Sigmoid colon (tissue), 7 donors: ENCODE measurements at regions of chr2 and their contacts with region 1.

Region 1: GRCh38 chr2:9205963-9206948 is at the start of gene ASAP2:
- DNase-seq: peak; percentile 89
- H3K4me3 ChIP-seq: peak within 1 kb of the TSS; percentile 72 to 95 (median 82)
- H3K27ac ChIP-seq: peak within 1 kb of the TSS; percentile 84 to 95 (median 90)
- H3K4me1 ChIP-seq: peaks cover 0 to 40% (median 22%) of the 10 kb centered on the region in 4 donors
- H3K27me3 ChIP-seq: no peaks in the 10 kb centered on the region
- CTCF ChIP-seq: peak; percentile 51 to 84 (median 70)
- EP300 ChIP-seq: no peak
- POLR2A ChIP-seq: no peak
- total RNA-seq, gene ASAP2: 22.1 to 56.5 (median 26.5) TPM

Region 2: DNA sequence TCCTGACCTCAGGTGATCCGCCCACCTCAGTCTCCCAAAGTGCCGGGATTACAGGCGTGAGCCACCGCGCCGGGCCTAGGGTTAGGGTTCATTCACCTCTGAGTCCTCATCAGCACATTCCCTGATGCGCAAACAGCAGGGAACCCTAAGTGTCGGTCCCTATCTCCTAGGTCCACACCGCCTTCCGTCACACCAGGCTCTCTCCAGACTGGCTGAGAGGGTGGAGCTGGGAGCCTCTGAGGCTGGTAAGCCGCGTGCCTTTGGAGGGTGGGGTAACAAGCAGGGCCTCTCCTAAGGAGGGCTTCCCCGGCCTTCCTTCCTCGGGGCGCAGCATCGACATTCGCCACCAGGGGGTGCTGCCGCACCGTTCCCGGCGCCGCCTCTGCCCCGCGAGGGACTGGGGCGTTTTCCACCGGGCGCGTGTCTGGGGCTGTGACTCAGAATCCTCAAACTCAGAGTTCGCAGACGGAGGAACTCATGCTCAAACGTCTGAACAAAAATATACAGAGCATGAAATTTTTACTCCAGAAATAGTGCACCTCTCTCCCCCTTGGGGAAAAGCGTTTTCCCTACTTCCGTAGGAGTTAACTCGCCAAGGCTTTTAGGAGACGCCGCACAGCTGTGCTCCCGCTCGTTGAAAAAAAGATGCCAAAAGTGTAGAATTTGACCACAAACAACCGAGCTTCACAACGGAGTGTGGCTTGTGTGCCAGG is 63.5 kb before region 1 on chr2:
- intact Hi-C with region 1: loop called (anchors 1 kb)
- DNase-seq: peak; percentile 95
- H3K4me3 ChIP-seq: peak overlapping the region in 3 of 4 donors; percentile 27 to 34 (median 28)
- H3K27ac ChIP-seq: peak overlapping the region; percentile 51 to 78 (median 66)
- H3K4me1 ChIP-seq: peaks cover 0 to 21% (median 18%) of the 10 kb centered on the region in 4 donors
- H3K27me3 ChIP-seq: no peaks in the 10 kb centered on the region
- CTCF ChIP-seq: peak; percentile 97 to 99 (median 98)
- EP300 ChIP-seq: no peak
- POLR2A ChIP-seq: no peak

Region 3: GRCh38 chr2:9191041-9191481 is 15.2 kb before region 1 on chr2:
- intact Hi-C with region 1: no loop called
- DNase-seq: peak; percentile 96
- H3K4me3 ChIP-seq: no peak overlapping the region
- H3K27ac ChIP-seq: peak overlapping the region; percentile 73 to 90 (median 83)
- H3K4me1 ChIP-seq: peaks cover 0 to 59% (median 52%) of the 10 kb centered on the region in 4 donors
- H3K27me3 ChIP-seq: no peaks in the 10 kb centered on the region
- CTCF ChIP-seq: no peak
- EP300 ChIP-seq: peak in 2 of 4 donors; percentile 2 to 76
- POLR2A ChIP-seq: no peak

Region 4: GRCh38 chr2:9217838-9218770 is 11.8 kb after region 1 on chr2:
- intact Hi-C with region 1: no loop called
- DNase-seq: no peak
- H3K4me3 ChIP-seq: no peak overlapping the region
- H3K27ac ChIP-seq: no peak overlapping the region
- H3K4me1 ChIP-seq: peaks cover 0 to 56% (median 43%) of the 10 kb centered on the region in 4 donors
- H3K27me3 ChIP-seq: no peaks in the 10 kb centered on the region
- CTCF ChIP-seq: no peak
- EP300 ChIP-seq: no peak
- POLR2A ChIP-seq: no peak

Region 5: DNA sequence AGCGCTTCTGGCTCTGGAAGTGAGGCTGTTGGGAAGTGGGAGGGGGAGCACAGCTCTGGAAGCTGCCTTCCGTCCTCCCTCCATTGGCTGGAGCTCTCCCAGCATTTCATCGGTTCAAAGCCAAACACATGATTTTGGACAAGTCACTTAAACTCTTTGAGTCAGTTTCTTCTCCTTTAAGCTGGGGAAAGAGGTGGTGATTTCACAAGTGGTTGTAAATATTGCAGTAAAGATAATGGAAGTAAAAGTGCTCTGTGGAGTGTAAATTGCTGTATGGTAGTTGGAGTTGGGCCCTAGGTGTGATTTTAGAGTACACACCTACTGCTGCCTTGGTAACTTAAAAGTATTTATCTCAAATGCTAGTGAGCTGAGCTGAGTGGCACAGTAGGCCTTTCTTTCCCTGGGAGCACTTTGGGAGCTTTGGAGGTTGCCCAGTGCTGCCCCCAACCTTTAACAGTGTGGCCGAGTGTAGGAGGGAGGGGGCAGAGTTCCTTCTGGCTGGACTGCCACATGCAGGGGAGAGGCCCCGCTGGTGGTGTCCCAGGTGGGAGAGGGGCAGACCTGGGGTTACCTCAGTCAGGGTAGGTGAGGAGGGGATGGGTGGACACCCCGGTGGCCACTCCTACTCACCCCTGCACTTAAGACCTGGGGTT is 55.1 kb after region 1 on chr2:
- intact Hi-C with region 1: loop called (anchors 5 kb)
- DNase-seq: peak; percentile 85
- H3K4me3 ChIP-seq: no peak overlapping the region
- H3K27ac ChIP-seq: peak overlapping the region; percentile 56 to 82 (median 72)
- H3K4me1 ChIP-seq: peaks cover 0 to 85% (median 79%) of the 10 kb centered on the region in 4 donors
- H3K27me3 ChIP-seq: no peaks in the 10 kb centered on the region
- CTCF ChIP-seq: no peak
- EP300 ChIP-seq: no peak
- POLR2A ChIP-seq: no peak

Region 6: DNA sequence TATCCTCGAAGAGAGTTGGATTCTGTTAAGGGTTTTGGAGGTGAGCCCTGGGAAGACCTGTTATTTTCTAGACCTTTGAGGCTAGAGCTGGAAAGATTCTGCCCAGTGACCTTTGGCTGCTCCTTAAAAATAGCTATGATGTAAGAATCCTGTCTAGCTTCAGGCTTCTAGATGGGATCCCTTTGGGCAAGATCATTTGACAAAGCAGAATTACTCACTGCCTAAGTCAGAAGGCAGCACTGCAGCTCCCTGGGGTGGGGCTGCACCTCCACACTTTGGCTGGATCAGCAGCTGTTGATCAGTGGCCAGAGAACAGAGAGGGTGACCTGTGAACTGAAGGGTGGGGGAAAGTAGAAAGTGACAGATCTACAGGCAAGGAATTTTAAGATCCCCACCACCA is 104.1 kb after region 1 on chr2:
- intact Hi-C with region 1: loop called (anchors 5 kb)
- DNase-seq: peak; percentile 81
- H3K4me3 ChIP-seq: no peak overlapping the region
- H3K27ac ChIP-seq: peak overlapping the region; percentile 75 to 90 (median 84)
- H3K4me1 ChIP-seq: peaks cover 0 to 70% (median 62%) of the 10 kb centered on the region in 4 donors
- H3K27me3 ChIP-seq: no peaks in the 10 kb centered on the region
- CTCF ChIP-seq: no peak
- EP300 ChIP-seq: peak in 1 of 4 donors; percentile 48
- POLR2A ChIP-seq: no peak

Region 7: DNA sequence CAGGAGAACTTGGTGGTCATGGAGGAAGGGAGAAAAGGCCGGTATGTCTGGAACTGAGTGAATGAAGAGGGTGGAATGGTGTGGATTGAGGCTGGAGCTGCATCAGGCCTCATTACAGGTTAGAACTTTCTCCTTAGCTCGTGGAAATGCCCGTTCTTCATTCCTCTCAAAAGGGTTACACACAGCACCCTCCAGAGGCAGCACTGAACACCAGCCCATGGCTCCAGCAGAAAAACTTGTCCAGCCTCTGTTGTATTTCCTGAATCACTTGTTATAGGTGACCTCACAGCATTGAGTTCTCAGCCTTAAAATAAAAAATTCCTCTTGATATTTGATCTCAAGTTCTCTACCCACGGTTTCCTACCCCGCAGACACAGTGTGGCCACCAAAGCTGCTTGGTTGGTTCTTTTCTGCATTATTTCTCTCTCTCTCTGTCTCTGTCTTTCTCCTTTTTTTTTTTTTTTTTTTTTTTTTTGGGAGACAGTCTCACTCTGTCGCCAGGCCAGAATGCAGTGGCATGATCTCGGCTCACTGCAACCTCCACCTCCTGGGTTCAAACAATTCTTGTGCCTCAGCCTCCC is 127.4 kb after region 1 on chr2:
- intact Hi-C with region 1: loop called (anchors 1 kb)
- DNase-seq: peak; percentile 81
- H3K4me3 ChIP-seq: no peak overlapping the region
- H3K27ac ChIP-seq: peak overlapping the region in 3 of 4 donors; percentile 18 to 73 (median 60)
- H3K4me1 ChIP-seq: peaks cover 0 to 38% (median 14%) of the 10 kb centered on the region in 4 donors
- H3K27me3 ChIP-seq: no peaks in the 10 kb centered on the region
- CTCF ChIP-seq: peak; percentile 52 to 85 (median 67)
- EP300 ChIP-seq: no peak
- POLR2A ChIP-seq: no peak

Region 8: DNA sequence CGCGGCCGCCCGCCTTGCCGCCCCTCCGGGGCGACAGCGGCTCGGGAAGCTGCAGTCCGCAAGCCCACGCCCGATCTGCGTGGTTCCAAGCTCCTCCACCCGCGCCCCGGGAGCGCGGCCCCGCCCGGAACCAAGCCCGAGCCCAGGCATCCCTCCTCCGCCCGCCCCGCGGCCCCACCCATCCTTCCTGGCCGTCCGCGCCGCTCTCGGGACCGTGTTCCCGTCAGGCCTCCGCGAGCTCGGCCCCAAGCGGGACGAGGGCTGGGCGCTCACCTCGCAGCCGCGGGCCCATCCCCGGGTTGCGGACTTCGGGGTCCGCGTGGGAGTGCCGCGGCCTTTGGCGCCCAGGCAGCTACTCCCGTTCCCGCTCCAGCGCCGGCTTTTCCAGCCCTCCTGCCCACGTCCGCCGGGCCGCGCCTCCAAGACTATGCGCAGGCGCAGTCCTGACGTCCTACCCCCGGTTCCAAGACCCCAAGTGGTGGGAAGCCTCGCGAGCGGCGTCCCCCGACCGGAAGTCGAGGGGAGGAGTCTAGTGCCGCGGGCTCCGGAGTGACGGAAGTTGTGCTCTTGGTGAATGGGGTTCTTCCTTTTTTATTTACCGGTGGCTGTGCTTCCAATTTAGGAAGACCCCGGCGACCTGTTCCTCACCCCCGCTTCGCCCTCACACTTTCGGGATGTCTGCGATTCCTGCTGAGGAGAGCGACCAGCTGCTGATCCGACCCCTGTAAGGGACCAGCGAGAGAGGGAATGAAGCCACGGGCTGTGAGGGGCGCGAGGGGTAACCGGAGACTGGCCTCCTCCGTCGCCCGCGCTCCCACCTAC is 217.1 kb after region 1 on chr2 and contains the starts of genes CPSF3 and ITGB1BP1:
- intact Hi-C with region 1: loop called (anchors 1 kb)
- DNase-seq: peak; percentile 99
- H3K4me3 ChIP-seq: peak within 1 kb of the TSS; percentile 84 to 99 (median 93)
- H3K27ac ChIP-seq: peak within 1 kb of the TSS; percentile 94 to 97 (median 96)
- H3K4me1 ChIP-seq: peaks cover 0 to 38% (median 33%) of the 10 kb centered on the region in 4 donors
- H3K27me3 ChIP-seq: no peaks in the 10 kb centered on the region
- CTCF ChIP-seq: peak in 1 of 4 experiments; percentile 31
- EP300 ChIP-seq: peak in 1 of 4 donors; percentile 69
- POLR2A ChIP-seq: no peak
- total RNA-seq, gene CPSF3: 22.9 to 33.5 (median 27.5) TPM
- total RNA-seq, gene ITGB1BP1: 52.3 to 75.6 (median 61.6) TPM